GM13976 (cell line): ENCODE measurements at regions of chr16 and their contacts with region 1.

Region 1: DNA sequence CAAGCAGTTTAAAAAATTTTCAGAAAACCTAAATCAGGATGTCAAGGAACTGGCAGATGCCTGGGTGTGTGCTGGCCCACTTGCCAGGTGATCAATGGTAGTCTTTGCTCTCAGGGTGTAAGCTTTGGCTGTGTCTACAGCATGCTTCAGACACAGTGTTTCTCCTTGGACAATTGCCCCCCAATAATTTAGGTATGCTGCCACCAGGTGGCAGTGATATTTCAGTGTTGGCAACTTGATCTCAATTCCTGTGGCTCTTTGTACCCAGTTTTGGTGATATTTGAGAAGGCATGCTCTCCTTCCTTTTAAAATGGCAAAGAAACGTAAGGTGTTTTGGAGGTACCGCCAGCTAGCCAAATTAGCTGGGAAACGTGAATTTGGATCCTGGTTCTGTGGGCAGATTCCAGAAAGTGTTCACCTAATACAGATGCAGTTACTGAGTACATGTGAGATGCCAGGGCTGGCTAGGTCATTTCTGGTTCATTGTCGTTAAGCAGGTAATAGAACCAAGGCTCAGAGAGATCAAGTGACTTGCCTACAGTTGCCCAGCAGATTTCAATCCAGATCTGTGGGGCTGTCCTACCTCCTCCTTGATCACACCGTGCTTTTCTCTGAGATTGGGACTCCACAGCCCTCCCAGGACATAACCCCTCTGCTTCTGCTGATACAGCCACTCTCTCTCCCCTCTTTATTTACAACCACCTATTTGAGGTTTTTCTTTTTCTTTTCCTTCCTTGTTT is 155.6 kb upstream of the PLCG2 start:
- DNase-seq: peak; percentile 74
- CTCF ChIP-seq: peak; percentile 38

Region 2: GRCh38 chr16:81403616-81404373 is 219.7 kb before region 1 on chr16:
- in situ Hi-C with region 1: loop called (anchors 10 kb)
- DNase-seq: peak; percentile 93
- CTCF ChIP-seq: peak; percentile 94